Naive thymus-derived CD4-positive, alpha-beta T cell (primary cell): ENCODE measurements at regions of chr7 and their contacts with region 1.

Region 1: DNA sequence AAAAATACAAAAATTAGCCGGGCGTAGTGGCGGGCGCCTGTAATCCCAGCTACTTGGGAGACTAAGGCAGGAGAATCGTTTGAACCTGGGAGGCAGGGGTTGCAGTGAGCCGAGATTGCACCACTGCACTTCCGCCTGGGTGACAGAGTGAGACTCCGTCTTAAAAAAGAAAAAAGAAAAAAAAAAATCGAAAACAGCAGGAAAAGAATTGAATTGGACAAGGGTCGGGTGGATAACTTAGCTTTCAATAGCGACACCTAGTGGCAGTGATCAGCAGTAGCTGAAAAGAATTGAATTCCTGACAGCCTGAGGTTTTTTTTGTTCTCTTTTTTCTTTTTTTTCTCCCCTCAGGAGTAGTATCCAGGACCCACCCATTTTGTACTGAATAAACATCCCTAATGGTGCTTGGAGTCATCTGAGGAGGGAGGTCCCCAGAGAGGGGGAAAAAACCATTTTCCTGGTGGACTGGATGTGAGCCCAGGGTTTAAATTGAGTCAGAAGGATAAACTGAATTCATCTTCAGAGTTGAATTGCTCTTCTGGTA is 55.1 kb downstream of the CYCS start:
- DNase-seq: peak in 8 of 9 donors; percentile 27 to 63 (median 54)
- ATAC-seq: peak; percentile 74
- H3K4me3 ChIP-seq: no peak overlapping the region
- H3K4me3 Mint-ChIP-seq: no peak overlapping the region
- H3K27ac ChIP-seq: no peak overlapping the region
- H3K27ac Mint-ChIP-seq: no peak overlapping the region
- H3K4me1 ChIP-seq: no peaks in the 10 kb centered on the region
- H3K4me1 Mint-ChIP-seq: peaks cover 0 to 17% (median 0%) of the 10 kb centered on the region in 7 donors
- H3K27me3 ChIP-seq: no peaks in the 10 kb centered on the region
- H3K27me3 Mint-ChIP-seq: no peaks in the 10 kb centered on the region

Region 2: DNA sequence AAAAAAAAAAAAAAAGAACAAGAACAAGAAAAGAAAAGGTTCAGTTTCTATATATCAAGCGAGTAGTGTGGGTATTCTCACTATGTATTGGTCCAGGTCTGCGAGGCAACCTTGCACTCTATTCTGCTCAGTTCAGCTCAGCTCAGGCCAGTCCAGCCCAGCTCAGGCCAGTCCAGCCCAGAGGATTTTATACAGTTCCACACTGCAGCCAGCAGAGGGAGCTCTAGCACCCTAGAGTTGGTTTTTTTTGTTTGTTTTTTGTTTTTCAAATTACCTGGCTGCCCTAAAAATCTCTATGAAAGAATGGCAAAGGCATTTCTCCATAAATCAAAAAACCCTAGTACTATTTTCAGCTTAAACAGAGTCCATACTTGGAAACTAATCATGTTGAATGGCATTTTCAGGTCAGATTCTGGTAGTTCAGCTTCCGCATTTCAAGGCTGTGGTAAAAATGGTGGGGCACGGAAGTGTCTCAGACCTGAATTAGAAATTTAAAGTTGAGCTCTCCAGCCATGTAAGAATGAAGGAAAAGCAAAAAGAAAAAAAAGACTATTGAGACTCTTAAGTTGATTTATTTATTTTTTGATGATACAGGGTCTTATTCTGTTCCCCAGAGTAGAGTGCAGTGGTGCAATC is 257.5 kb before region 1 on chr7:
- CTCF ChIA-PET with region 1: interaction called, 42 read pairs
- POLR2A ChIA-PET with region 1: no interaction called
- intact Hi-C with region 1: loop called (anchors 1 kb)
- DNase-seq: peak in 8 of 9 donors; percentile 6 to 52 (median 32)
- ATAC-seq: peak; percentile 90
- H3K4me3 ChIP-seq: no peak overlapping the region
- H3K4me3 Mint-ChIP-seq: no peak overlapping the region
- H3K27ac ChIP-seq: no peak overlapping the region
- H3K27ac Mint-ChIP-seq: no peak overlapping the region
- H3K4me1 ChIP-seq: no peaks in the 10 kb centered on the region
- H3K4me1 Mint-ChIP-seq: peaks cover 0 to 6% (median 0%) of the 10 kb centered on the region in 7 donors
- H3K27me3 ChIP-seq: no peaks in the 10 kb centered on the region
- H3K27me3 Mint-ChIP-seq: no peaks in the 10 kb centered on the region

Region 3: GRCh38 chr7:24896031-24896501 is 173.9 kb before region 1 on chr7:
- CTCF ChIA-PET with region 1: no interaction called
- POLR2A ChIA-PET with region 1: no interaction called
- intact Hi-C with region 1: loop called in 1 of 2 experiments (anchors 1 kb)
- DNase-seq: no peak
- ATAC-seq: peak; percentile 64
- H3K4me3 ChIP-seq: no peak overlapping the region
- H3K4me3 Mint-ChIP-seq: peak overlapping the region in 1 of 10 donors; percentile 8
- H3K27ac ChIP-seq: no peak overlapping the region
- H3K27ac Mint-ChIP-seq: peak overlapping the region in 2 of 9 donors; percentile 36 to 54
- H3K4me1 ChIP-seq: peaks cover 0 to 22% of the 10 kb centered on the region in 2 donors
- H3K4me1 Mint-ChIP-seq: peaks cover 16 to 72% (median 30%) of the 10 kb centered on the region in 7 donors
- H3K27me3 ChIP-seq: no peaks in the 10 kb centered on the region
- H3K27me3 Mint-ChIP-seq: no peaks in the 10 kb centered on the region